ENCODE measurements at regions of chr5 and their contacts with region 1.

Region 1: GRCh38 chr5:80083101-80083890 is 48.1 kb downstream of the THBS4 start:
- DNase-seq: no peak
- H3K4me3 Mint-ChIP-seq: peak overlapping the region; percentile 83
- H3K27ac Mint-ChIP-seq: peak overlapping the region; percentile 93
- H3K4me1 Mint-ChIP-seq: peaks cover 19% of the 10 kb centered on the region
- H3K27me3 Mint-ChIP-seq: peaks cover 4% of the 10 kb centered on the region

Region 2: DNA sequence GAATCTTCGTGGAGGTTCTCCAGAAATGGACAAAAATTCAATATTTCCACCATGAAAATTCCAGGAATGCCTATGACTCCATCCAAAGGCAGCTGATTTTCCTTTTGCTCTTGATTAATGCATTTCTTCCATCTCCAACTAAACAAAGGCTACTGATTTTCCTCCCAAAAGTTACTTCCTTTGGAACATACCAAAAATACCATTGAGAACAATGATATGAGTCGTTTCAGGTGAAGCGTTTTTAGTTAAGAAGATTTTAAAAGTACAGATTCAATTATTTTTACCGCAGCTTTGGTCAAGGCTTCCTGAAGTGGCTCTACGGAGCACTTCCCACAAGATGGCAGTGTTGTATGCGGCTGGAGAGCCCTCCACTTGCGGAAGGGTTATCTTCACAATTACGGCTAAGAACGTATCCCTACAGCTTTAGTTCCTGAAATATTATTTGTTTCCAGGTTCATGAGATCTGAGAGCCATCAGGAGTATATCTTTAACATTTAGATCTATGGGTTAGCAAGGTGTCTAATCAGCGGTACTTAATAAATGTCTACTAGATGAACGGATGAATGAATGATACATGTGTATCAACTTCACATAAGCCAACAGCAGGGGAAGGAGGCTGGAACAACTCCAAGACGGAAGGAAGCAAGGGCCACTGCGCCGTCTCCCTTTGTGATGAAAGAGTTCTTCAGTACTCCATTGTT is 1062.3 kb before region 1 on chr5:
- intact Hi-C with region 1: loop called (anchors 5 kb)
- DNase-seq: no peak
- H3K4me3 Mint-ChIP-seq: no peak overlapping the region
- H3K27ac Mint-ChIP-seq: no peak overlapping the region
- H3K4me1 Mint-ChIP-seq: peaks cover 6% of the 10 kb centered on the region
- H3K27me3 Mint-ChIP-seq: peaks cover 59% of the 10 kb centered on the region

Region 3: DNA sequence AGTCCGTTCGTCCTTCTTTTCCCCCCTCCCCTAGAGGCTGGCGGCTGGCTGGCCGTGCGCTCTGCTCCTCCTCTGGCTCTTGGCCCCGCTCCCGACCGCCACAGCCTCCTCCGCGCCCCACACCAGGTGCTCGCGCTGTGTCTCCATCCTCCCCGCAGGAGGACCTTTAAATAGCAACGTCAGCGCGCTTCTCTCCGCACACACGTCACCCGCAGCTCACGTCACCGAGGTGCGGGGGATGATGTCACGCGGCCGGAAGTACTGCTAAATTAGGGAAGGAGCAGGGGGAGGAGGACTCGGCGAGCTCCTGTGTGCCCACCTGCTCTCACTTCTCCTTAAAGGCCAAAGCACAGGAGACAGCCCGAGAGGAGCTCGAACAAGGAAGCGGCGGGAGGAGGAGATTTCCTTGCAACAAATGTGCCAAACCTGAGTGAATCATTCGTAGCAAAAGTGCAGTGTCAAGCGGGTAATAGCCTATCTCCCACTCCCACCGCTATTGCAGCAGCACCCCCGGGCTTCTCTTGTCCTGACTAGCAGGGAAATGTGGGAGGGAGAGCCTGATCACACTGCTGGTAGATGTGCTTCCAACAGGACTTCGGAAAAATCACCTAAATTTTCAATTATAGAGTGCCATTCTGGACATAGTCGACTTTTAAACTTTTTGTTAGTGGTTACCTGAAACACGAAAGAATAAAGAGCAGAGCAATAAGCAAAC is 568.7 kb before region 1 on chr5:
- intact Hi-C with region 1: loop called (anchors 1 kb)
- DNase-seq: peak; percentile 88
- H3K4me3 Mint-ChIP-seq: peak overlapping the region; percentile 99
- H3K27ac Mint-ChIP-seq: peak overlapping the region; percentile 100
- H3K4me1 Mint-ChIP-seq: peaks cover 43% of the 10 kb centered on the region
- H3K27me3 Mint-ChIP-seq: peaks cover 26% of the 10 kb centered on the region

Region 4: DNA sequence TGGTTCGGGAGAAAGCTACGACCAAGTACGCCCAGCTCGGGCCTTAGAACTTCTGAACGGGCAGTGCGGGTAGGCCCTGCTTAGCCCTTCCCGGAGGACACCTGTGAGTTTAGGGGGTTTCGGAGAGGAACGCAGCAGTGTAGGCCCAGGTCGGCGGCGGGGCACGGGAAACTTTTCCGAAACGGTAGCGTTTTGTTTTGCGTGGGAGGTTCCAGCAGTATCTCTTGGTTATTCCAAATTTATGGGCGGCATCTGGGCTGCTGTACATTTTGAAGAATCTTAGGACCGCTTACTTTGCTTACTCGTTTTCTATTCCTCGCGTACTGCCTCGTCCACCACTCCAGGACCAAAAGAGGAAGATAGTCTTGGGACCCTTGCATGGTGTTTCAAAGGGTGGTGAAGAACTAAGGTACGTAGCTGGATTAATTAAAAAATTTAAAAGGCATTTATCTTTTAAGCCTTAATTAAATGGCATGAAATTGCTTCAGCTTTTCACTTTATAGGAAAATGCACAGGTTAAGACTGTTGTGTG is 470.6 kb before region 1 on chr5:
- intact Hi-C with region 1: no loop called
- DNase-seq: no peak
- H3K4me3 Mint-ChIP-seq: peak overlapping the region; percentile 91
- H3K27ac Mint-ChIP-seq: peak overlapping the region; percentile 97
- H3K4me1 Mint-ChIP-seq: peaks cover 45% of the 10 kb centered on the region
- H3K27me3 Mint-ChIP-seq: no peaks in the 10 kb centered on the region

Region 5: DNA sequence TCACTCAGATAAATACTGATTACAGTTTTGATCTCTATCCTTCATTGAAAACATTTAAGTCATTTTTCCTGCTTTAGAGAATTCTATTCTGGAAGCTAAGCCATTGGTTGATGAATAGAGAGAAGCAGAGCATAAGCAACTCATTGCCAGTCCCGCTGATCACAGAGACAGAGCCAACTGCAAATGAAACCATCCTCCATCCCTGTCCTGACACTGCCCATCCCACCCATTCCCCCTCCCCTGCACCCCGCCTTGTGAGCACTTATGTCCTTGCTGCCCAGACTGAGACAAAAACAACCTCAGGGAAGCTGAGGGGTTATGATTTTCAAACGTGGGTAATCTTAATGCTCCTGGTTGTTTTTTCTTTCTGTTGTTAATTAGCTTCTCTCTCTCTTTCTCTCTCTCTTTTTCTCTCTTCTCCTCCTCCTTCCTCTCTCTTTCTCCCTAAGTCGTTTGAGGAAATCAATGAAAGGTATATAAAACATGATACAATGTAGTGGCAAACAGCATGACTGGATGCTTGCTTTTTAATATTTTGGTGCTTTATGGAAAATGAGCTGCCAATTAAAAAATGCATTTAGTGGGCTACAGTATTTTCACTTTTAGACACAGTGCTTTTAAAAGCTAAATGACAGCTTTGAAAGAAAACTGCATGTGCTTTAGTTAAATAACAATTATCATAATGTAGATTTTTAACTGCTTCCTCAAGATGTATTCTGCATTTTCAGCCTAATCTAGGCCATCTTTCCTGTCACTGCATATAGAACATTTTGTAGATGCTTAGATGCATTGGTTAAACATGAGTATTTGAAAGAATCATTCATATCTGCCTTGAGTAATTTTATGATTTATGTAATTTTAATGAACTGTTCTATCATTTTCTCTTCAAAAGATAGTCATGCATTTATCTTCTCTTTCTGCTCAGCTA is 336.4 kb before region 1 on chr5:
- intact Hi-C with region 1: no loop called
- DNase-seq: no peak
- H3K4me3 Mint-ChIP-seq: no peak overlapping the region
- H3K27ac Mint-ChIP-seq: no peak overlapping the region
- H3K4me1 Mint-ChIP-seq: no peaks in the 10 kb centered on the region
- H3K27me3 Mint-ChIP-seq: peaks cover 15% of the 10 kb centered on the region

Region 6: GRCh38 chr5:79857714-79858409 is 225.4 kb before region 1 on chr5:
- intact Hi-C with region 1: loop called (anchors 1 kb)
- DNase-seq: peak; percentile 62
- H3K4me3 Mint-ChIP-seq: no peak overlapping the region
- H3K27ac Mint-ChIP-seq: no peak overlapping the region
- H3K4me1 Mint-ChIP-seq: no peaks in the 10 kb centered on the region
- H3K27me3 Mint-ChIP-seq: peaks cover 17% of the 10 kb centered on the region

Region 7: DNA sequence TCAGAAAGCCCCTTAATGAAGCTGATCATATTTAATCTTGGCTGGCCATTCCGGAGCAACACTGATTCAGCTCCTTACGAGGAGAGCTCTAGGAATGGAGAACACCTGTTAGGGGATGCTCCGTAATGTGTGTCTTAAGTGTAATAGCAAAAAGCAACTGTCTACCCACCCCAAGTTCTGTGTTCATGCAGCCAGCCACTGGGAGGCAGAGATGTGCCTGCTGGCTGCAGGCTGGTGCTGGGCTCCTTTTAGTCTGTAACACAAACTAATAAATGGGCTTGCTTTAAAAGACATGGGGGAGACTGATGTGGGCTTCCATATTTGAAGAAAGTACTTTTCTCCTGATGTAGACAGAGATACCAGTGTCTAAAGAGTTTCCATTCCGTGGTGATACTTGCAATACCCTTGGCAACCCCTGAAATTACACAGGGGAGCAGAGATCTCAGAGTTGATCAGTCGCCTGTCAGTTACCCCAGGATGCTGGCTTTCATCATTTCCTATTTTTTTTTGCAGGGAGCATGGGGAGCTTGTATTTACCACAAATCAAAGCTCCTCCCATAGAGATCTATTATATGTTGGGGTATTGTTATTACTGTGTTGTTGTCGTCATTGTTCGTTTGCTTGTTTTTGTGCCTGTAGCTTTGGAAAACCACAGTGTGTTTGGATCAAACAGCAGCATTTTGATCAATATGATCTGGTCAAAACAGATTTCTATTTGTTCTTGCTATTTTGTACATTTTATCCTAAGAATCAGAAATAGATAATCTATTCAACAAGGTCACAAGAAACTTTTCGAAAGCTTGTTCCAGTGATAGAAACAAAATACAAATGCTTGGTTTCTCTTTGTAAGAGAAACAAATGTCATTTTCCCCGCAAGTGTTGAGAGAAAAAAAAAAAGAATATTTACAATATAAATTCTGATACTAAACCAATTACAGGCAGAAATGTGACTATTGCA is 158.1 kb before region 1 on chr5:
- intact Hi-C with region 1: loop called (anchors 1 kb)
- DNase-seq: no peak
- H3K4me3 Mint-ChIP-seq: no peak overlapping the region
- H3K27ac Mint-ChIP-seq: no peak overlapping the region
- H3K4me1 Mint-ChIP-seq: peaks cover 14% of the 10 kb centered on the region
- H3K27me3 Mint-ChIP-seq: peaks cover 14% of the 10 kb centered on the region

Region 8: GRCh38 chr5:80101993-80102392 is 18.7 kb after region 1 on chr5:
- intact Hi-C with region 1: no loop called
- DNase-seq: no peak
- H3K4me3 Mint-ChIP-seq: no peak overlapping the region
- H3K27ac Mint-ChIP-seq: no peak overlapping the region
- H3K4me1 Mint-ChIP-seq: peaks cover 8% of the 10 kb centered on the region
- H3K27me3 Mint-ChIP-seq: no peaks in the 10 kb centered on the region

Measured in activated T-helper 1 cell treated with anti-CD3 and anti-CD28 coated beads, Interleukin-12 subunit alpha, Interleukin-12 subunit beta, Interleukin-2, Interleukin-4 antibody, amounts not matched to agents 30 ng/mL and 10 ng/mL and 1 ng/mL, durations not matched to agents 14 hours and 24 hours and 36 hours (primary cell).